Activated T-helper 2 cell treated with anti-CD3 and anti-CD28 coated beads, Interferon-gamma antibody, Interleukin-2, Interleukin-4, amounts not matched to agents 10 μg/mL and 5 μg/mL and 100 μg/mL, durations not matched to agents 14 hours and 24 hours and 36 hours (primary cell): ENCODE measurements at regions of chr16 and their contacts with region 1.

Region 1: GRCh38 chr16:80569440-80570105 is 28.8 kb downstream of the DYNLRB2 start:
- DNase-seq: peak; percentile 76
- H3K4me3 Mint-ChIP-seq: peak overlapping the region; percentile 34
- H3K27ac Mint-ChIP-seq: peak overlapping the region; percentile 83
- H3K4me1 Mint-ChIP-seq: peaks cover 42% of the 10 kb centered on the region
- H3K27me3 Mint-ChIP-seq: peaks cover 2% of the 10 kb centered on the region

Region 2: GRCh38 chr16:80591071-80591915 is 21.7 kb after region 1 on chr16:
- intact Hi-C with region 1: loop called (anchors 1 kb)
- DNase-seq: peak; percentile 58
- H3K4me3 Mint-ChIP-seq: peak overlapping the region; percentile 53
- H3K27ac Mint-ChIP-seq: peak overlapping the region; percentile 48
- H3K4me1 Mint-ChIP-seq: peaks cover 39% of the 10 kb centered on the region
- H3K27me3 Mint-ChIP-seq: peaks cover 50% of the 10 kb centered on the region

Region 3: DNA sequence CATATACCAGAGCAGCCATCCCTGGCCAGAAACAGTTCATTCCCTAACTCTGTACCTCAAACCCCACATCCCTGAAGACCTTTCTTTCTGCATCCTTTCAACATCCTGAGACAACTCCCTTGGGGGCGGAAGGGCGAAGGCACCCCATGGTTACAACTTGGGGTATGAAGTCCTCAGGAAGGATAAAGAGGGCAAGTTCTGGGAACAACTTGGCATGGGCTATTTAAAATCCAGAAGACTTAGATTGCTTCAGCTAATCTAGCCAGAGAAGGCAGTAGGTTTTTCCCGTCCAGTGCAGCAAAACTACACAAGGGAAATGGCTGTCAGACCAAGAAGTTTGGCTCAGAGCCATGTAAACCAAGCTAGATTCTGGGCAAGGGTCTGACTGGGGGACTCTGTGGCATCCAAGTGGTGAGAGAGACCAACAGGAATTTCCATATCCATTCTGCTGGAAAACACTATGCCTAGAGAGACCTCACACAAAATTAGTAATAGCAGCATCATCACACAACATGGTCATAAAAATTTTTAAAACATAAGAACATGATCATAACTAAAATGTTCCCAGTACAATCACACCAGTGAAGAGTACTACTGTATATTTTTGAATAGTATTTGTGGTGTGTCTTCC is 121.7 kb after region 1 on chr16:
- intact Hi-C with region 1: loop called (anchors 5 kb)
- DNase-seq: no peak
- H3K4me3 Mint-ChIP-seq: no peak overlapping the region
- H3K27ac Mint-ChIP-seq: no peak overlapping the region
- H3K4me1 Mint-ChIP-seq: peaks cover 42% of the 10 kb centered on the region
- H3K27me3 Mint-ChIP-seq: no peaks in the 10 kb centered on the region

Region 4: DNA sequence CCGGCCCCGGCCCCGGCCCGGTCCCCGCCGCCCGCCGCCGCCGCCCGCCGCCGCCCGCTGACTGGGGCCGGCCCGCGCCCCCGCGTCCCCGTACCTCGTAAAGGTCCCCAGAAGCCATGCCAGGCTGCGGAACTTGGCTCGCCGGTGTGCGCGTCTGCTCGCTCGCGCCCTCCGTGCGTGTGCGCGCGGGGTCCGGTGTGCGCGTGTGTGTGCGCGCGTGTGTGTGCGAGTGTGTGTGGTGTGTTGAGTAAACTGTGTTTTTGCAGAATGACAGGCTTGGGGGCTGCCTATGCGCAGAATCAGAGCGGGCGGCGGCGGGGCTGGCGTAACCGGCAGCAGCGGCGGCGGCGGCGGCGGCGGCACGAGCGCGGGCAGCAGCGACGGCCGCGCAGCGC is 234.5 kb after region 1 on chr16:
- intact Hi-C with region 1: loop called (anchors 1 kb)
- DNase-seq: peak; percentile 53
- H3K4me3 Mint-ChIP-seq: peak overlapping the region; percentile 94
- H3K27ac Mint-ChIP-seq: peak overlapping the region; percentile 90
- H3K4me1 Mint-ChIP-seq: peaks cover 49% of the 10 kb centered on the region
- H3K27me3 Mint-ChIP-seq: no peaks in the 10 kb centered on the region